Mammary epithelial cell (primary cell): ENCODE measurements at regions of chr9 and their contacts with region 1.

Region 1: GRCh38 chr9:93962561-93963440 is 7.6 kb upstream of the BARX1 start:
- DNase-seq: peak; percentile 61
- H3K4me3 ChIP-seq: no peak overlapping the region
- H3K27ac ChIP-seq: no peak overlapping the region
- H3K4me1 ChIP-seq: peaks cover 5% of the 10 kb centered on the region
- H3K27me3 ChIP-seq: peaks cover 28% of the 10 kb centered on the region
- CTCF ChIP-seq: peak; percentile 77 to 79

Region 2: GRCh38 chr9:93682232-93682968 is 280.4 kb before region 1 on chr9:
- CTCF ChIA-PET with region 1: no interaction called
- dilution Hi-C with region 1: no loop called
- in situ Hi-C with region 1: loop called (anchors 5 to 25 kb)
- intact Hi-C with region 1: no loop called
- DNase-seq: peak; percentile 25
- H3K4me3 ChIP-seq: no peak overlapping the region
- H3K27ac ChIP-seq: no peak overlapping the region
- H3K4me1 ChIP-seq: no peaks in the 10 kb centered on the region
- H3K27me3 ChIP-seq: no peaks in the 10 kb centered on the region
- CTCF ChIP-seq: peak; percentile 69 to 82

Region 3: GRCh38 chr9:94030318-94031179 is 67.7 kb after region 1 on chr9:
- CTCF ChIA-PET with region 1: no interaction called
- dilution Hi-C with region 1: no loop called
- in situ Hi-C with region 1: no loop called
- intact Hi-C with region 1: no loop called
- DNase-seq: peak; percentile 85
- H3K4me3 ChIP-seq: peak overlapping the region; percentile 77 to 84 (median 84)
- H3K27ac ChIP-seq: peak overlapping the region; percentile 56
- H3K4me1 ChIP-seq: peaks cover 16% of the 10 kb centered on the region
- H3K27me3 ChIP-seq: no peaks in the 10 kb centered on the region
- CTCF ChIP-seq: no peak